ENCODE measurements at regions of chr15 and their contacts with region 1.

Region 1: GRCh38 chr15:81400640-81401236 is 26.7 kb upstream of the TMC3 start:
- DNase-seq: no peak
- ATAC-seq: no peak

Region 2: DNA sequence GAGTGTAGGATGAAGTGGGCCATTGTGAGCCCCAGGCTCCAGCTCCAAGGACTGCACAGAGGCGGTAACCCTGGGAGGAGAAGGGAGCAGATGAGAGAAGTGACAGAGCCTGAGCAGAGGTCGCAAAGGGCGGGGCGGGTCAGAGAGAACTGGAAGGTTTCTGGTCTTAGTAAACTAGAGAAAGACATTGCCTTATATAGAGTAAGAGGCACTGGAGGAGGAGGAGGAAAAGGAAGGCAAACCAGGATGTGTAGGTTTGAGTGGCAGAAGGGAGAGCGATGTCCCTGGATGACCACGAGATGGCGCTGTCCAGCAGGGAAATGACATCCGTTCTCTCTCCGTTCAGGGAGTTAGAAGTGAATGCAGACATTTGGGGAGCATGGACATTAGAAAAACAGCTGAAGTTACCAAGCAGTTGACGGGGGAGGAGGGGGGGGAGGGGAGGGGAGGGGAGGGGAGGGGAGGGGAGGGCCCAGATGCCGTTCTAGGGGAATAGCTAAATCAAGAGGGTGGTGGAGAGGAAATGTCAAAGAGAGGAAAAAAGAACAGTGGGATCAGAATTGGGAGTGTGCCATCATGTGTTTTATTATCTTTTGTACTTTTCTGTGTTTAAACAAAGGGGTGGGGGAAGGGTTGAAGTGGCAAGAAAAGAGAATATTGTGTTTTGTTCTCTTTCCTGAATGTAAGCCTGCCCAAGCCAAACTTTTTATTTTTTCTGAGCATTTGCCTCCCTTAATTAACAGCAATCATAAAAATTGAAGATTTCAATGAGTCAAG is 125.6 kb before region 1 on chr15:
- intact Hi-C with region 1: loop called (anchors 1 kb)
- DNase-seq: peak; percentile 67
- ATAC-seq: peak; percentile 74

Region 3: DNA sequence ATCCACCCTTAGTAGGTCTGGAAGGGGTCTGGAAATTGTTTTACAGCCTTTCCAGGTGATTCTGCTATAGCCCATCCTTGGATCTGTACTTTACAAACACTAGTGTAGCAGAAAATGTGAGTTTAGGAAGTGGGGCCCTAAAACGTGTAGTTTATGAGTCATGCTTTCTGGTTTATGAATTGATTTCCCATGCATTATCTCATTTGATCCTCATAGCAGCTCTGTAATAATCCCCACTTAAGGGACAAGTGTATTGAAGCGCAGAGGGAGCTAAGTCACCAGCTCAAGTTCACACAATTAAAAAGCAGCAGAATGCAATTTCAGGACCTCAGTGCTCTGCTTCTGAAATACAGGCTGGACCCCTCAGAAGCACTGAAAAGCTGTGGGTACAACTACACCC is 54.1 kb before region 1 on chr15:
- intact Hi-C with region 1: loop called (anchors 5 kb)
- DNase-seq: no peak
- ATAC-seq: no peak

Measured in Right ventricle myocardium inferior (tissue), 1 donor.